ENCODE measurements at regions of chr7 and their contacts with region 1.

Region 1: GRCh38 chr7:107044347-107045194 is at the start of gene PRKAR2B:
- DNase-seq: peak; percentile 76 to 82
- ATAC-seq: peak; percentile 89 to 98 (median 96)
- H3K4me3 ChIP-seq: peak within 1 kb of the TSS; percentile 79 to 97 (median 86)
- H3K27ac ChIP-seq: peak within 1 kb of the TSS; percentile 38 to 90 (median 84)
- H3K4me1 ChIP-seq: peaks cover 0 to 28% (median 18%) of the 10 kb centered on the region in 9 donors
- H3K27me3 ChIP-seq: peaks cover 0 to 8% (median 0%) of the 10 kb centered on the region in 7 donors
- CTCF ChIP-seq: peak in 2 of 9 donors; percentile 36 to 40
- total RNA-seq, gene PRKAR2B: 18.8 to 42.5 (median 24.9) TPM

Region 2: DNA sequence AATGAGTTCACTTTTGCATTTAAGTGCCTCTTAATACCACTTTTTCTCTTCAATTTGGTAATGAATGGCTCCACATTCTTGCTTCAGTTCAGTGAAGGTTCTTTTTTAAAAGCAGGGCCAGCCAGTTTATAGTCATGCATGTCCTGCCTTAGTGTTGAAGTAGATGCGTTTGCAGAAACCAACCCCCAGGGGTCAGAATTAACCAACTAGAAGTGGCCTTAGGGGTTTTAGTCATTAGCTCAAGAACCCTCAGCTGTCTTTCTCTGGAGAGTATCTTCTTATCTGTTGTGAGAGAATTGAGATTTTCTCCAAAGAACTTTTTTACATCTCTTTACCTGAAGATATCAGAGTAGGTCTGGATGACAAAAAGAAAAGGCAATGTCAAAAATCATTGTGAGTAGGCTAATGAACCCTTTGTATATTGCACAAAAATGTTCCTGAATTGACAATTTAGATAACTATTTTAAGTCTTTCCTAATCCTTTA is 97.3 kb before region 1 on chr7:
- intact Hi-C with region 1: loop called in 2 of 10 experiments (anchors 10 kb)
- DNase-seq: peak in 1 of 2 donors; percentile 56
- ATAC-seq: peak; percentile 59 to 93 (median 84)
- H3K4me3 ChIP-seq: no peak overlapping the region
- H3K27ac ChIP-seq: no peak overlapping the region
- H3K4me1 ChIP-seq: peaks cover 0 to 1% (median 0%) of the 10 kb centered on the region in 9 donors
- H3K27me3 ChIP-seq: no peaks in the 10 kb centered on the region
- CTCF ChIP-seq: peak; percentile 47 to 85 (median 74)

Region 3: DNA sequence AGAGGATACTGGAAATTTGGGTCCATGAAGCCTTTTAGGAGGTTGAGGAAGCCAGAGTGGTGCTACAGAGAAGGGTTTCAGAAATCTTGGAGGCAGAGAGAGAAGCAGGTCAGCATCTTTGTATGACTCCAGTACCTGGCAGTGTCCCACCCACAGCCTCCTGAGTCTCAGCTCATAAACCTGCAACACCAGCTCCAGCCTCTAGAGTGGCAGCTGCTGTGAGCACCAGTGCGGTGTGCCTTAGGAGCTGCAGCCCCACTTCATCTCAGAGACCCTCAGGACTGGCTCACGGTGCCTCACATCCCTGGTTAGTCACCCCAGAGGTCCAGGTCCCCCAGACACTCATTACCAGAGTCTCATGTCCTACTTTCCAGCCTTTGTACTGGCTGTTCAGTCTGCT is 84.8 kb before region 1 on chr7:
- intact Hi-C with region 1: loop called in 1 of 10 experiments (anchors 10 kb)
- DNase-seq: no peak
- ATAC-seq: no peak
- H3K4me3 ChIP-seq: no peak overlapping the region
- H3K27ac ChIP-seq: no peak overlapping the region
- H3K4me1 ChIP-seq: peaks cover 0 to 4% (median 0%) of the 10 kb centered on the region in 9 donors
- H3K27me3 ChIP-seq: no peaks in the 10 kb centered on the region
- CTCF ChIP-seq: no peak

Region 4: DNA sequence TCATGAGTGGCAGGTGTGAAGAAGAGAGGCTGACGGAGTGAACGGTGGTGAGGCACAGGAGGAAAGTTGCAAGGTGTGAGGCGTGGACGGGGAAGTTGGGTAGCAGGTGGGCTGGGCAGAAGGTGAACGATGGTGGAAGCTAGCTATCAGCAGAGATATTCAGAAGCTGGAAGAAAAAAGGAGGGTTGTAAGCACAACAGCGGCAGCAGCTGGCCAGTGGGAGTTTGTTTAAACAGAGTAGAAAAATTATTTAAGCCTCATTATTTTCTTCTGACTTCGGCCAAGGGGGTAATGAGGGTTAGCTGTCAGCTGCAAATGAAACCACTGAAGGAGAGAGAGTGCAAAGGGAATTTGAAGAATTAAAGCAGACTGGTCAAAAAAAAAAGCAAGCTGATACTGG is 62.2 kb before region 1 on chr7:
- intact Hi-C with region 1: loop called in 1 of 10 experiments (anchors 10 kb)
- DNase-seq: no peak
- ATAC-seq: no peak
- H3K4me3 ChIP-seq: no peak overlapping the region
- H3K27ac ChIP-seq: no peak overlapping the region
- H3K4me1 ChIP-seq: peaks cover 0 to 19% (median 9%) of the 10 kb centered on the region in 9 donors
- H3K27me3 ChIP-seq: no peaks in the 10 kb centered on the region
- CTCF ChIP-seq: no peak

Region 5: GRCh38 chr7:107150375-107151073 is 106.0 kb after region 1 on chr7:
- intact Hi-C with region 1: loop called in 1 of 10 experiments (anchors 10 kb)
- DNase-seq: peak; percentile 38 to 79
- ATAC-seq: peak in 7 of 8 donors; percentile 57 to 75 (median 69)
- H3K4me3 ChIP-seq: no peak overlapping the region
- H3K27ac ChIP-seq: no peak overlapping the region
- H3K4me1 ChIP-seq: peaks cover 0 to 9% (median 0%) of the 10 kb centered on the region in 9 donors
- H3K27me3 ChIP-seq: no peaks in the 10 kb centered on the region
- CTCF ChIP-seq: peak; percentile 45 to 82 (median 73)

Region 6: GRCh38 chr7:107168233-107169119 is 123.9 kb after region 1 on chr7 and contains the start of gene HBP1:
- intact Hi-C with region 1: loop called in 1 of 10 experiments (anchors 1 kb)
- DNase-seq: peak; percentile 98 to 100
- ATAC-seq: peak; percentile 90 to 96 (median 94)
- H3K4me3 ChIP-seq: peak within 1 kb of the TSS; percentile 57 to 91 (median 78)
- H3K27ac ChIP-seq: peak within 1 kb of the TSS; percentile 88 to 99 (median 96)
- H3K4me1 ChIP-seq: peaks cover 7 to 48% (median 34%) of the 10 kb centered on the region in 9 donors
- H3K27me3 ChIP-seq: no peaks in the 10 kb centered on the region
- CTCF ChIP-seq: no peak
- total RNA-seq, gene HBP1: 45.0 to 80.3 (median 64.8) TPM

Measured in heart right ventricle (tissue), 16 donors.